GM10248 (cell line): ENCODE measurements at regions of chr15 and their contacts with region 1.

Region 1: DNA sequence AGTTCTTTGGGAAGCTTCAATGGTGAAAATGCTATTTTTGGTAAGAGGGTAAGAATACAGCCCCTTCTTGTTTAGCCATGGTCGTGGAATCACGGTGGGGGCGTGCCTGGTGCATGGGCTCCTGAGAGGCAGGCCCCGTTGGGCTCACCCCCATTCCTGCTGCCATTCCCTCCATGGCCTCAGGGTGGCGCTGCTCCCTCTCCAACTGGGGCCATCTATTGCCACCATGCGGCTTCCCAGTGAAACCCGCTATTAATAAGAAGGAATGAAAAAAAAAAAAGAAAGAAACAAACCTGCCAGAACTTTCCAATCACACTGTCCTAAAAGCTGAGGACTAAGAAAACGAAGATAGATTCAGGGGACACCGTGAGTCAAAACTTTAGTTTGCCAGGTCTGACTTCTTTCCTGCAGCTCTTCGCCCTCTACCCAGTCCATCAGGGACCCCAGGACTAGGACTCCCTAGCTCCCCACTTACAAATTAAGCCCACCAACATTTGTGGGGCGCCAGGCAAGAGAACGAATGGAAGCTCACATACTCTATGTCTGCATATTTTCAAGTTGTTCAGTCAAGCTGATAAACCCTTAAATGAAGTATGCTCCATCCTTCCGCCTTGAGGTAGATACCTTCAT is 30.6 kb upstream of the ABHD2 start:
- DNase-seq: peak; percentile 83
- CTCF ChIP-seq: peak; percentile 98

Region 2: GRCh38 chr15:88932271-88932874 is 125.2 kb before region 1 on chr15:
- CTCF ChIA-PET with region 1: no interaction called
- POLR2A ChIA-PET with region 1: no interaction called
- DNase-seq: no peak
- CTCF ChIP-seq: no peak

Region 3: GRCh38 chr15:89068325-89068784 is 10.7 kb after region 1 on chr15:
- CTCF ChIA-PET with region 1: interaction called, 29 read pairs
- POLR2A ChIA-PET with region 1: no interaction called
- DNase-seq: peak; percentile 45
- CTCF ChIP-seq: no peak